Aorta (tissue), 5 donors: ENCODE measurements at regions of chr14 and their contacts with region 1.

Region 1: DNA sequence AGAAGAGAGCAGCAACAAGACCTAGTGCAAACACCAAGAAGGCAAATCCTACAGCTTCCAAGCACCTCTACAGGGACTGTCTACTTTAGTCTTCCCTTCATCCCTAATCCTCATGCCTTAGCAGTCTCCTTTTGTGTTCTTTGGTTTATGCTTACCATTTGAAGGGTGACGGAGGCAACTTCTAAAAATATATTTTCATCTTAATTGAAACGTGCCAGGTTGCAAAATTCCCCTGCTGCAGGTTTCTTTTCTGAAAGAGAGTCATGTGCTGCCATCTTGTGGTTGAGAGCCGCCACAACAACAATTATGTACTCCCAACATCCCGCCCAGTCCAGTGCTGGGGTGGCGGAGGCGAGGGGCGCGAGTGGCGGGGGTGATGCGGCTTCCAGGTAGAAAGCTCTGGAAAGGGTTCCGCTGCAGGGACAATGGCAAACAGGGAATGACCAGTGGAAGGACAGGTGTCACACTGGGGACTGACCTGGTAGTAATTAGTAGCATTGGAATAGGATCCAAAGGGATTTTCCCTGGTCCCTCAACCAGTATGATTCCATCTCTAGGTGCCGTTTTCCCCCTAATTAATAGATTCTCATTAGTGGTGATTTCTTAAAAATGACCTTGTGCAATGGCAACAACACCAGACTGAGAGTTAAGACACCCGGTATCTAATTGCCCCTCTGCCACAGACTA is 80.3 kb upstream of the GNG2 start:
- DNase-seq: peak; percentile 72 to 87
- ATAC-seq: peak; percentile 84
- H3K4me3 ChIP-seq: no peak overlapping the region
- H3K27ac ChIP-seq: no peak overlapping the region
- H3K4me1 ChIP-seq: no peaks in the 10 kb centered on the region
- H3K27me3 ChIP-seq: no peaks in the 10 kb centered on the region

Region 2: GRCh38 chr14:51283402-51284085 is 496.6 kb before region 1 on chr14:
- intact Hi-C with region 1: loop called (anchors 1 to 2 kb)
- DNase-seq: no peak
- ATAC-seq: peak; percentile 82
- H3K4me3 ChIP-seq: no peak overlapping the region
- H3K27ac ChIP-seq: no peak overlapping the region
- H3K4me1 ChIP-seq: no peaks in the 10 kb centered on the region
- H3K27me3 ChIP-seq: no peaks in the 10 kb centered on the region

Region 3: DNA sequence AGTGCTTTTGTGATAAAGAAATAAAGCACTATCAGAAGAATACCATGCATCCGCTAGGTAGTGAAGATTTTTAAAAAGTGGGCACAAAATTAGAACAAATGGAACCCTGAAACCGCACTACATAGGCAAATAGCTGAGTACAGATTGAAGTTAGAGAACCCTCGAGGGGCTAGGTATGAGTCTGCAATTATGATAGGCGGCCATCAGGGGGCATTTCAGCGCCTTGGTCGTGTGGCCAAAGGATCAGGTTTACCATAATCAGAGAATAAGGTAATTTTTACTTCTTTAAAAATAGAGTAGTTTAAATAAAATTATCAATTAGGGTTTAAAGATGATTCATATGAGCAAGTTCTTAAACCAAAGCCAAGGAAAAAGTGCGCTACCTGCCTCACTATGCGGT is 410.3 kb before region 1 on chr14:
- intact Hi-C with region 1: loop called in 1 of 2 experiments (anchors 5 kb)
- DNase-seq: no peak
- ATAC-seq: no peak
- H3K4me3 ChIP-seq: no peak overlapping the region
- H3K27ac ChIP-seq: no peak overlapping the region
- H3K4me1 ChIP-seq: no peaks in the 10 kb centered on the region
- H3K27me3 ChIP-seq: no peaks in the 10 kb centered on the region

Region 4: GRCh38 chr14:51691176-51691575 is 89.0 kb before region 1 on chr14:
- intact Hi-C with region 1: no loop called
- DNase-seq: no peak
- ATAC-seq: no peak
- H3K4me3 ChIP-seq: no peak overlapping the region
- H3K27ac ChIP-seq: no peak overlapping the region
- H3K4me1 ChIP-seq: no peaks in the 10 kb centered on the region
- H3K27me3 ChIP-seq: no peaks in the 10 kb centered on the region

Region 5: DNA sequence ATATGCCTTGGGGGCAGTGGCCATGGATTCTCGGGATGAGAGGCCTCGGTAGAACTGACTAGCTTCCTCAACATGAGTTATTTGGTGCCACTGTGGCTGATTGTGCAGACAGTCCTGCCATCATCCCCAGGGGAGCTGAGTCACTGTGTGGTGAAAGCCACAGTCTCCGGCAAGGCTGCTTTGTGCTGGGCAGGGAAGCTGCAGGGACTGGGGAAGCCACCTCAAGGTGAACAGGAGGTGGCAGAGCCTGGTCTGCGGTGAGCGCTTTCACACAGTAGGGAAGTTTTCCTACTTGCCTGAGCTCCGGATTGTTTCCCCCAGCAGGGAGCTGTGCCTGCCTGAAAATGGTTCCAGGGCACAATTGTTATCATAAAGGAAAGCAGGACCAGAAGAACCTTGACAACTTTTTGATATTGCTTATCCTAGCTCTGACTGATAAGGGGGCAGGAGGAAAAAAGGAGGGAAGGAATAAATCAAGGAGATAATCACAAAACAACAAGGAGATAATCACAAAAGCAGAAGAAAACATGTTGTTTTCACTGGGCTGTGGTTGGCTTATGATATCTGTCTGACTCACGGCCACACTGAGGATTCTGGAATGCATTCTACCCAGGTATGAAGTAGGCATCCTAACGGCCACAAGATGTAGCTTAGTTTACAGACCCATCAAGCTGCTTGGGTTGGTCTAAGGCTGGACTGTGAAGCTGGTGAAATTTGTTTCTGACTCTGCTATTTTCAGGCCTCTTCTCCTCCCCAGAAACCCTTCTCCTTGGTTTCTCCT is 48.1 kb after region 1 on chr14:
- intact Hi-C with region 1: no loop called
- DNase-seq: peak in 1 of 2 donors; percentile 72
- ATAC-seq: peak; percentile 62
- H3K4me3 ChIP-seq: no peak overlapping the region
- H3K27ac ChIP-seq: no peak overlapping the region
- H3K4me1 ChIP-seq: no peaks in the 10 kb centered on the region
- H3K27me3 ChIP-seq: peaks cover 0 to 2% of the 10 kb centered on the region in 2 donors